ENCODE measurements at regions of chr2 and their contacts with region 1.

Region 1: DNA sequence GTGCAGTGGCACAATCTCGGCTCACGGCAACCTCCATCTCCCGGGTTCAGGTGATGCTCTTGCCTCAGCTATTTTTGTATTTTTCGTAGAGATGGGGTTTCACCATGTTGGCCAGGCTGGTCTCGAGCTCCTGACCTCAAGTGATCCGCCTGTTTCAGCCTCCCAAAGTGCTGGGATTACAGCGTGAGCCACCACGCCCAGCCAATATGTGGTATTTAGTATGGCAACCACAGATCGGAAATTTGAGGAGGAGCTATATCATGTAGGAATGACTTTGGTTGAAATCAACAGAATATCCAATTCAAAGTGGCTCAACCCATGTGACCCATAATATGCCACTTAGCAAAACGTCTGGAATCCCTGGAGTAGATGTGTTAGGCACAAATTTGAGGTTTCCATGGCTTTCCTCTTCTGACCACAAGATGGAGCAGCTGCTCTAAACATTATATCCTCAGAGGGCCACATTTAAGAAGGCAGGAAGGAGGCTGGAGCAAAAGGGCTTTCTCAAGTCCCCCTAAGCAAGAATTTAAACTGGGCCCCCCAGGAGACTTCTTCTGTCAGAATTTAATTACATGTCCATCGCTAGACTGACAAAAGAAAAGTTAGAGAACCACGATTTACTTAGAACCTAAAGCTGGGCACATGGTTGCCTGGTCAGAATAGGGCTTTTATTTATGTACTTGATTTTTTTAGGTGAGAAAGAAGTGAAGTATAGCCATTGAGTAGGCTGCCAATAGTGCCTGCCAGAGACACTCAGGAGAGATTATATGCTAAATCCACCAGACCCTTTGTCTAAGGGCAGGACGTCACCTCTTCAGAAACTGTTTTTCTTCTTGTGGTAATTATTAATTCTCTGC is 49.6 kb upstream of the ITSN2 start:
- DNase-seq: peak in 2 of 5 donors; percentile 20 to 27
- ATAC-seq: peak in 3 of 4 donors; percentile 73 to 89 (median 78)
- H3K4me3 ChIP-seq: no peak overlapping the region
- H3K27ac ChIP-seq: no peak overlapping the region
- H3K4me1 ChIP-seq: no peaks in the 10 kb centered on the region
- H3K27me3 ChIP-seq: peaks cover 0 to 14% (median 0%) of the 10 kb centered on the region in 9 donors
- CTCF ChIP-seq: peak; percentile 74 to 92 (median 82)
- POLR2A ChIP-seq: no peak

Region 2: DNA sequence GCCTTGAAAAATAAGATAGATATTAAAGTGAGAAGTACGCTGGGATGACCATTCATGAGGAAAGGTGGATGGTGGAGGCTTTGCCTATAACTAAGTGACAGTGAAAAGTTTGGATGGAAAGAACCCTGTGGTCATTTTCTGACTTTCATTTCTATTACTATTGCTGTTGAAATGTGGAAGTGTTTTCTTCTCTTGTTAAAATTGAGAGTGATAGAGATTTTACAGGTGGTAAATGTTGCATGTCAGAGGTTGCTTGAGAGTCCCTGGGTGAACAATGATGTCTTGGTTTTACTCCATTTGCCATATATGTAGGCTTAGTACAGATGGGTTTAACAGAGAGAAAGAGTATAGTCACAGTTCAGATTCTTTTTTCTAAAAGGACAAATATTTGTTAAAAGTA is 99.5 kb after region 1 on chr2:
- intact Hi-C with region 1: no loop called
- DNase-seq: no peak
- ATAC-seq: no peak
- H3K4me3 ChIP-seq: no peak overlapping the region
- H3K27ac ChIP-seq: no peak overlapping the region
- H3K4me1 ChIP-seq: peaks cover 3 to 81% (median 55%) of the 10 kb centered on the region in 12 donors
- H3K27me3 ChIP-seq: no peaks in the 10 kb centered on the region
- CTCF ChIP-seq: no peak
- POLR2A ChIP-seq: no peak

Region 3: DNA sequence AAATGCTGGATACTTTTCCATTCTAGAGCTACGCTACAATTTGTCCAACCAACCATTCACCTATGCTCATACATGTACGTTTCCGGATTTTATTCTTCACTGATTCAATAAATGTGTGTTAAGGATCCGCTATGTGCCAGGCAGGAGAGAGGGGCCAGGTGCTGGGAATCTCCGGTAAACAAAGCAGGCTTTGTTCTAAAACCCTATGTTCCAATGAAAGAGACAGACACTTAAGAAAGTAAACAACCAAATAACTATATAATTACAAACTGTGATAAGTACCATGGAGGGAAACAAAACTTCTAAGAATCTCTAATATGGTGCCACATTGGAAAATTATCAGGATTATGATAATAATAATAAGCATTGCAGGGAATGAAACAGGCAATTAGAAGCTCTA is 780.6 kb after region 1 on chr2:
- intact Hi-C with region 1: loop called in 7 of 10 experiments (anchors 5 to 10 kb)
- DNase-seq: no peak
- ATAC-seq: no peak
- H3K4me3 ChIP-seq: no peak overlapping the region
- H3K27ac ChIP-seq: no peak overlapping the region
- H3K4me1 ChIP-seq: no peaks in the 10 kb centered on the region
- H3K27me3 ChIP-seq: no peaks in the 10 kb centered on the region
- CTCF ChIP-seq: no peak
- POLR2A ChIP-seq: no peak

Measured in heart left ventricle (tissue), 16 donors.